ENCODE measurements at regions of chr15 and their contacts with region 1.

Region 1: DNA sequence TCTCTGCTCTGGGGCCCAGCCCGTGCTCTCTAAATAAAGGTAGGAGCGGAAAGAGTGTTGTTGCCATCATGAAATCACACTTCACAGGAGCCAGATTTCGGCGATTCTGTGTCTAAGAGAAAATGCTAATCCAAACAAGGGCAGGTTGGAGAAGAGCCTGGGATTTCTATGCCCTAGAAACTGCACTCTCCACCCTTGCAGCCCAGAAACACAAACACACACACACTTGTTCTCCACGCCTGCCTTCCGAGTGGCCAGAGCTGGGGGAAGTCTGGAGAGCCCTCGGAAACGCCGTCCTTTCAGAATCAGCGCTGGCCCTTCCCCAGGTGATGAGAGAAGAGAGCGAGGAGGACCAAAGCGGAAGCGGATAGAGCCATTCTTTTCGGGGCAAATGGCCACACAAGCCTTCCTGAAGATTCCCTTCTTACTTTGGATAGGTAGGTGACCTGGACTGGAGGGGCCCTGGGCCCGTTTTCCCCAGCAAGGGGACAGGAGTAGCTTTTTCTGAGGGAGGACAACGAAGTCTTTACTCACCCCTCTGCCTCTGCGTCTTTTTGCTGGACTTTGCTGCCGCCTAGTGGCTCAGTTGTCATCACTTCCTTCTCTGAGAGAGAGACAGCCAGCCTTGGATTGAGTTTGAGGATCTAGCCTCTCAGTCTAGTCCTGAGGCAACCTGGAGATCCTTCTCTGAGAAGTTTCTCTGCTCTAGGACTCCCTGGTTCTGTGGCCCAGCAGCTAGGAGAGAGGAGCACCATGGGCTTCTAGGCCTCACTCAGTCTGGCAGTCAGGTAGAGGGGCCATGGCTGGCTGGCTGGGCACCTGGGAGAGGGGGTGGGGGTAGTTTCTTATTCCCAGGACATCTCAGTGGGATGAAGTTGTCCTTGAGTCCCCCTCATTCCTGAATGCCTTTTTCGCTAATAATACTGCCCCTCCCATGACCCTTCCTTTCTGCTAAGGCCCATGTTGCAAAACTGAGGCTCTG is 37.7 kb downstream of the SENP8 start:
- DNase-seq: peak; percentile 94
- H3K4me3 Mint-ChIP-seq: peak overlapping the region; percentile 80
- H3K27ac Mint-ChIP-seq: peak overlapping the region; percentile 10
- H3K4me1 Mint-ChIP-seq: peaks cover 6% of the 10 kb centered on the region
- H3K27me3 Mint-ChIP-seq: peaks cover 13% of the 10 kb centered on the region

Region 2: DNA sequence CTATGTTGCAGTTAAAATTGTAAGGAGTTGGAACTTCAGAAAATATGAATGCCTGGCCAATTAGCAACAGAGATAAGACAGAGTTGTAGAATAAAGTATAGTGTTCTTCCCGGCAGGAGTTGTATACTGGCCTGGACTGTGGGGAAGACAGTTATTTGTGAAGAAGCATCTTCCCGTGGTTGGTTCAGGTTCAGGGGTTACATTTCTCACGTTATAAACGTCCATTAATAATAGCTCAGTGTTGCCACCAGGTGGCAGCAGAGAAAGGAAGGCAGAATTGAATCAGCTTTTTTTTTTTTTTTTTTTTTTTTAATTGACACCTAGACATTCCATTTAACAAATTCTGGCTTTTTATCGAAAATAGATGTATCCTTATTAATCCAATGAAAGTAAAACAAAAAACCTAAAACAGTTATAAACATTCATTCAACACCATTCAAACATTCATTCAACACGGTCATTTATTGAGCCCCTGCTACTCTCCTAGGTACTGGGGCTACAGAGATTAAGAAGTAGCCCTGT is 412.0 kb before region 1 on chr15:
- intact Hi-C with region 1: loop called (anchors 2 kb)
- DNase-seq: peak; percentile 85
- H3K4me3 Mint-ChIP-seq: no peak overlapping the region
- H3K27ac Mint-ChIP-seq: no peak overlapping the region
- H3K4me1 Mint-ChIP-seq: no peaks in the 10 kb centered on the region
- H3K27me3 Mint-ChIP-seq: peaks cover 4% of the 10 kb centered on the region

Region 3: DNA sequence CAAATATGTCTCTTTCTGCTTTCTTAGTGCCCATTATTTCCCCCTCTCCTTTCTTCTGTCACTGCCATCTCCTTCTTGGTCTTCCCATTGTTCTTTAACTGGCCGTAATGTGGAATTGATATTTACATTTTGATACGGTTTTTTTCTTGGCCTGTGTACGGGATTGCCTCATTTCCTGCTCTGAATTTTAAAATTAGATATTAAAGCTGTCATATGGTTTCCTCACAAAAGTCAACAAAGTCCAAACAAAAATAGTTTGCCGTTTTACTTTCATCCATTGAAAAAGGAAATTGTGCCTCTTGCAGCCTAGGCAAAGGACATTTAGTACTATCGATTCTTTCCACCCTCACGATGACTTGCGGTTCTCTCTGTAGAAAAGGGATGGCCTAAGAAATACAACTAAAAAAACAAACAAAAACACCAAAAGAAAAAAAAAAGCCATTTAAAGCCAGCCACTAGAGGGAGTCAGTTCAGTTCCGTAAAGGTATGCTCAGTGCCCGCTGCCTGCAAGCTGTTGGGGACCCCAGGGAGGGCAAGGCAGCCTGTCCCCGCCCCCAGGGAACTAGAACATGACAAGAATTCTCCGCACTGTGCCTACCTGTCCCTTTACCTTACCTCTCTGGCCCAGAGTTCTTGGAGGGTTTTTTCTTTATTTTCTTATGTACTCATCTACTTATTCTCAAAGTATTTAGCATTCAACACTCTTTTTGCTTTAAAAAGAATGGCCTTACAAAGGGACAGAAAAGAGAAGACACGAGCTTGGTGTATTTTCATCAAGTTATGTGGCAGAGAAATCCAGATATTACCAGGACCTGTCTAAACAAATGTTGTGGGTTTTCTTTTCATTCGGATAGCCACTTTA is 375.6 kb before region 1 on chr15:
- intact Hi-C with region 1: loop called (anchors 1 kb)
- DNase-seq: peak; percentile 78
- H3K4me3 Mint-ChIP-seq: no peak overlapping the region
- H3K27ac Mint-ChIP-seq: peak overlapping the region; percentile 13
- H3K4me1 Mint-ChIP-seq: peaks cover 15% of the 10 kb centered on the region
- H3K27me3 Mint-ChIP-seq: peaks cover 2% of the 10 kb centered on the region

Region 4: GRCh38 chr15:71800835-71801745 is 354.8 kb before region 1 on chr15:
- intact Hi-C with region 1: loop called (anchors 1 kb)
- DNase-seq: peak; percentile 75
- H3K4me3 Mint-ChIP-seq: no peak overlapping the region
- H3K27ac Mint-ChIP-seq: no peak overlapping the region
- H3K4me1 Mint-ChIP-seq: no peaks in the 10 kb centered on the region
- H3K27me3 Mint-ChIP-seq: no peaks in the 10 kb centered on the region

Region 5: DNA sequence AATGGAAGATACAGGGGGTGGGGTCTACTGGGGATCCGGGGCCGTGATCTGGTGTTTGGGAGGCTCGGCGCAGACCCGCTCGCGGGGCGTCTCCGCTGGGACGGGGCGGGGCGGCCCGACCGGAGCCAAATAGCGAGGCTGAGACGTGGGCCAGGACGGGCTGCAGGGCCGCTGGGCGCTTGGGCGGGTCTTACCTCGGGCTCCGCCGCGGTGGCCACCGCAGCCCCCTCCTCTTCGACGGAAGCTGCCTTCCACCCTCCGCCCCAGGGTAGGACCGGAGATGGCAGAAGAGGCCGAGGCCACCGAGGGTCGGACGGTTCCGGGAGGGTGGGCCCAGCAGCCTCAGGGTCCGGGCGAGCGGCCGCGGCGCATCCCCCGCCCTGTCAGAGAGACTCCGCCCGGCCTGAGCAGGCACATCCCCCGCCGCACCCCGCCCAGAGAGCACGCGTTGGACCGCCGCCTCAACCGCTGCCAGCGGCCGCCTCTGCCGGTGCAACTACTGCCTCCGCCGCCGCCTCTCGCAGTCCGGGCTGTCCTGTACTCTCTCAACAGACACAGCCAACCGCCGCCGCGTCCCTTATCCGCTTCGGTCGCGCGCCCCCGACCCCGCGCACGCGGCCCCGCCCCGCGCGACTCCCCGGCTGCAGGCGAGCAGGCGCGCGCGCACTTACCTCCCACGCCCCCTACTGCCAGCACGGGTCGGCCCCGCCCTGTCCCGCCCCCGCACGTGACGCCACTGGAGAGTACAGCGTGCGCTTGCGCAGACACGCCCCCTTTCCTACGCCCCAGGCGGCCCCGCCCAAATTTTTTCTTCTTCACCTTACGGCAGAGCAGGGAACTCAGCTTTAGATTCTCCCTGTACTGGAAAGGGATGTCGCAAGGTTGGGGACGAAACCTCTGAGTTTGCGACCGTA is 38.2 kb before region 1 on chr15 and contains the start of gene MYO9A:
- intact Hi-C with region 1: loop called (anchors 1 kb)
- DNase-seq: peak; percentile 98
- H3K4me3 Mint-ChIP-seq: peak within 1 kb of the TSS; percentile 95
- H3K27ac Mint-ChIP-seq: peak within 1 kb of the TSS; percentile 99
- H3K4me1 Mint-ChIP-seq: peaks cover 26% of the 10 kb centered on the region
- H3K27me3 Mint-ChIP-seq: peaks cover 17% of the 10 kb centered on the region
- total RNA-seq, gene MYO9A: 19.4 and 21.3 TPM in 2 replicates

Measured in activated CD4-positive, alpha-beta T cell treated with anti-CD3 and anti-CD28 coated beads, Interleukin-2, amount 10 ng/mL, durations not matched to agents 24 days and 14 days (primary cell).